Right ventricle myocardium inferior (tissue), 1 donor: ENCODE measurements at regions of chr3 and their contacts with region 1.

Region 1: GRCh38 chr3:132399054-132399929 is 18.0 kb upstream of the DNAJC13 start:
- DNase-seq: no peak
- ATAC-seq: peak; percentile 50

Region 2: GRCh38 chr3:132253262-132253878 is 145.9 kb before region 1 on chr3:
- intact Hi-C with region 1: loop called (anchors 5 kb)
- DNase-seq: no peak
- ATAC-seq: no peak

Region 3: DNA sequence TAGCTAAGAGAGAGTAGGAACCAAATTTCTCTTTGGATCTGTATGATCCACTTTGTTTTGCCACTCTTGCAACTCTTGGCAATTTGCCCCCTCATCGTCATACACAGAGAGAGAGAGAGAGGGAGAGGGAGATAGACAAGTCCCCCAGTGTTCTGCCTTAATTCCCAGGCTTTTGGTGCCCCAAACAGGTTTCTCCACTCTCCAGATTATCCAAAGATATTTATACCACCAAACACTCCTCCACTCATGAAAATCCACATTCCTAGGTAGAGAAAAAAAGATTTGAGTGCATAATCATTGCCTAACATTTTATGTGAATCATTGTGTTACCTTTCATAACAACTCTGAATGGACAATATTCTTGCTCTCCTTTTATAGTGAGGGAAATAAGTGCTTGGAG is 66.8 kb before region 1 on chr3:
- intact Hi-C with region 1: no loop called
- DNase-seq: no peak
- ATAC-seq: no peak

Region 4: GRCh38 chr3:132352541-132353143 is 46.6 kb before region 1 on chr3:
- intact Hi-C with region 1: loop called (anchors 1 kb)
- DNase-seq: no peak
- ATAC-seq: peak; percentile 52

Region 5: DNA sequence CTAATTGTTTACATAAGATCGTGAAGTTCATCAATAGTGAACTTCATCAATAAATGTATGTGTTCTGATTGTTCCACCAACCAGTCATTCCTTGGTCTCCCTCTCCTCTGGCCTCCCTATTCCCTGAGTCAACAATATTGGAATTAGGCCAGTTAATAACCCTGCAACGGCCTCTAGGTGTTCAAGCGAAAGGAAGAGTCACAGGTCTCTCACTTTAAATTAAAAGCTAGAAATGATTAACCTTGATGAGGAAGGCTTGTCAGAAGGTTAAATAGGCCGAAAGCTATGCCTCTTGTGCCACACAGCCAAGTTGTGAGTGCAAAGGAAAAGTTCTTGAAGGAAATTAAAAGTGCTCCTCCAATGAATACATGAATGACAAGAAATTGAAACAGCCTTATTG is 108.4 kb after region 1 on chr3:
- intact Hi-C with region 1: no loop called
- DNase-seq: no peak
- ATAC-seq: no peak